ENCODE measurements at regions of chr13 and their contacts with region 1.

Region 1: DNA sequence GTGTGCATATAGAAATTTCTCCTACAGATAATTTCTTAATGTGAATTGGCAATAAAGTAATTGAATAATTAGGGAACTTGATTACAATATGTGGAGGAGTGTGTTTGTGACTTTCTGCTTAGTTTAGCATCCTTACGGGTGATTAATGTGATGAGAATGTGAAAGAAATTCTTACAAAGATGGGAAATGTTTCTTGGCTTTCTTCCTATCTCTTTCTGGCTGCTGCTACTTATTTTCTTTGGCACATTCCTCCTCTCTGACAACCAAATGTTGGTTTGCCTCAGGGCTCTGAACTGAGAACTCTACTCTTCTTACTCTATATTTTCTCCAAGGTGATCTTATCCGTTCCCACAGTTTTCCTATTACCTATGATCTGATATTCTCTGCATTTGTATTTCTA is 300.1 kb downstream of the TBC1D4 start:
- DNase-seq: no peak
- ATAC-seq: no peak
- H3K4me3 ChIP-seq: no peak overlapping the region
- H3K4me3 Mint-ChIP-seq: no peak overlapping the region
- H3K27ac ChIP-seq: no peak overlapping the region
- H3K27ac Mint-ChIP-seq: no peak overlapping the region
- H3K4me1 ChIP-seq: no peaks in the 10 kb centered on the region
- H3K4me1 Mint-ChIP-seq: no peaks in the 10 kb centered on the region
- H3K27me3 ChIP-seq: peaks cover 0 to 3% of the 10 kb centered on the region in 2 experiments
- H3K27me3 Mint-ChIP-seq: peaks cover 20 to 26% of the 10 kb centered on the region in 2 donors

Region 2: DNA sequence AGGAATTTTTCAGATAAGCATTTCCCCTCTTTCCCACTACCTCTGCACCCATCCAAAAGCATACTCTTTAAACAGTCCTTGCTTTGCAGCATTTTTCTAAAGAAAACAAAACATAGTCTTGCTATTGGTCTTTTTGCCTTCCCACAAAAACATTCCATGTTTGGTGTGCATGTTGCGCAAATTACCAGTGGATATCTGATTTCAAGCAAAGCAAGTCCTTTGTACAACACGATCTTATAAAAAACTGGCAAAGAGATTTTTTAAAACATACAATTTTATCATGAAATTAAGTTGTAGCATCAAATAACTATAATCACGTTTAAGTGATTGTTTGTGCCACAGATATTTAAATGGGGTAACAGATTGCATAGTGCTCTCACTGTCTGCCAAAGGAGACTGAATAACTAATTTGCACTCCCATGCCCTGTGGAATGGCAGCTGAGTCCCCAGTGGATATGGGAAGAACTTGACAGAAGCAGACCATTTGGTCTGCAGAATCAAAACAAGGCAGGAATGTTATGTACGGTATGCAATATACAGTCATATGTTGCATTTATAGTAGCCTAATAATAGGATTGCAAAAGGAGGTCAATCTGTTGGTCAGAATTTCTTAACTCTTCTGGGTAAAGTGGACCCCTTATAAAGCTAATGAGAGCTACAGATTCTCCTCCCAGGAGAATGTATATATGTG is 14.4 kb after region 1 on chr13:
- CTCF ChIA-PET with region 1: no interaction called
- POLR2A ChIA-PET with region 1: interaction called in 1 of 2 experiments, 12 read pairs
- DNase-seq: no peak
- ATAC-seq: no peak
- H3K4me3 ChIP-seq: no peak overlapping the region
- H3K4me3 Mint-ChIP-seq: no peak overlapping the region
- H3K27ac ChIP-seq: no peak overlapping the region
- H3K27ac Mint-ChIP-seq: no peak overlapping the region
- H3K4me1 ChIP-seq: no peaks in the 10 kb centered on the region
- H3K4me1 Mint-ChIP-seq: no peaks in the 10 kb centered on the region
- H3K27me3 ChIP-seq: peaks cover 0 to 2% of the 10 kb centered on the region in 2 experiments
- H3K27me3 Mint-ChIP-seq: peaks cover 28 to 41% of the 10 kb centered on the region in 2 donors

Measured in T-cell (primary cell).